ENCODE measurements at regions of chr9 and their contacts with region 1.

Region 1: GRCh38 chr9:99104459-99105151 is at the start of gene TGFBR1:
- DNase-seq: peak; percentile 90 to 96 (median 92)
- H3K4me3 ChIP-seq: peak within 1 kb of the TSS; percentile 40 to 62
- H3K4me3 Mint-ChIP-seq: peak within 1 kb of the TSS; percentile 87 to 96 (median 91)
- H3K27ac ChIP-seq: peak within 1 kb of the TSS; percentile 70
- H3K27ac Mint-ChIP-seq: peak within 1 kb of the TSS; percentile 87 to 95 (median 92)
- H3K4me1 ChIP-seq: peaks cover 57% of the 10 kb centered on the region
- H3K4me1 Mint-ChIP-seq: peaks cover 45 to 65% (median 58%) of the 10 kb centered on the region in 4 donors
- H3K27me3 ChIP-seq: no peaks in the 10 kb centered on the region
- H3K27me3 Mint-ChIP-seq: no peaks in the 10 kb centered on the region
- total RNA-seq, gene TGFBR1: 26.4 to 27.4 TPM

Region 2: GRCh38 chr9:99057665-99058625 is 46.7 kb before region 1 on chr9:
- CTCF ChIA-PET with region 1: interaction called, 26 read pairs
- POLR2A ChIA-PET with region 1: interaction called, 82 read pairs
- intact Hi-C with region 1: loop called (anchors 1 kb)
- DNase-seq: peak; percentile 73 to 86 (median 81)
- H3K4me3 ChIP-seq: peak overlapping the region; percentile 7 to 71
- H3K4me3 Mint-ChIP-seq: peak overlapping the region; percentile 83 to 95 (median 88)
- H3K27ac ChIP-seq: peak overlapping the region; percentile 30
- H3K27ac Mint-ChIP-seq: peak overlapping the region; percentile 80 to 93 (median 86)
- H3K4me1 ChIP-seq: peaks cover 71% of the 10 kb centered on the region
- H3K4me1 Mint-ChIP-seq: peaks cover 59 to 92% (median 77%) of the 10 kb centered on the region in 4 donors
- H3K27me3 ChIP-seq: no peaks in the 10 kb centered on the region
- H3K27me3 Mint-ChIP-seq: no peaks in the 10 kb centered on the region

Region 3: DNA sequence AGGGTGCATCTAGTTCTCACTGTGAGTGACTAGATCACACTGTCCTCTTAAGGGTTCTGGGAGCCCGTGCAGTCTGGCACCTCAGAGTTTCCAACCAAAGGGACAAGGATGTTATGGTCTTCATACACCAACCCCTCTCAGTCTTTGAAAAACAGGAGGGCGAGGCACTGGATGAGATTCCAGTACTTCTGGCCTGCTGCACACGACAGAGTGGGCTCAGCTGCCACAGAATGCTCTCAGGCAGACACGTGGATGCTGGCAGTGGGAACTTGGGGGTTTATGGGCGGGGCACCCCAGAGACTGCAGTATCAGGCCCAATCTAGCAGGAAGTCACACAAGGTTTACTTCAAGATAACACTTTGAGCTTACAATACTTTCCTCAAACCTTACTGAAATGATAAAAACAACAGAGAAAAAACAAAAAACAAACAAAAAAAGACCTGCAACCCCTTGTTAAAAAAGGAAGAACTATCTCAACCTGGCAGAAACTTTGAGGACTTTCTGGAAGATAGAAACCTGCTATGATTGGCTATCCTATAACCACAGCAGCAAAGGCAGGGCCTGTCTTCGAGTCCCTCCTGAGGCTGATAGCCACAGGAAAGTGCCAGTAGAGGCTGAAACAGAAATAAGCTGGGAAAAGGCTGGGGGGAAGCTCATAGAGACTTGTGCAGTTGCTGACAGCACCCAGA is 28.0 kb before region 1 on chr9:
- CTCF ChIA-PET with region 1: interaction called, 3 read pairs
- POLR2A ChIA-PET with region 1: interaction called, 18 read pairs
- intact Hi-C with region 1: loop called (anchors 2 kb)
- DNase-seq: peak; percentile 39 to 61 (median 50)
- H3K4me3 ChIP-seq: no peak overlapping the region
- H3K4me3 Mint-ChIP-seq: peak overlapping the region; percentile 31 to 81 (median 65)
- H3K27ac ChIP-seq: peak overlapping the region; percentile 8
- H3K27ac Mint-ChIP-seq: peak overlapping the region; percentile 72 to 94 (median 82)
- H3K4me1 ChIP-seq: peaks cover 36% of the 10 kb centered on the region
- H3K4me1 Mint-ChIP-seq: peaks cover 32 to 66% (median 47%) of the 10 kb centered on the region in 4 donors
- H3K27me3 ChIP-seq: no peaks in the 10 kb centered on the region
- H3K27me3 Mint-ChIP-seq: no peaks in the 10 kb centered on the region

Region 4: GRCh38 chr9:99118782-99119466 is 14.3 kb after region 1 on chr9:
- CTCF ChIA-PET with region 1: interaction called, 17 read pairs
- POLR2A ChIA-PET with region 1: interaction called, 45 read pairs
- intact Hi-C with region 1: loop called (anchors 1 kb)
- DNase-seq: peak; percentile 66 to 78 (median 70)
- H3K4me3 ChIP-seq: peak overlapping the region; percentile 5 to 7
- H3K4me3 Mint-ChIP-seq: peak overlapping the region; percentile 49 to 95 (median 78)
- H3K27ac ChIP-seq: no peak overlapping the region
- H3K27ac Mint-ChIP-seq: peak overlapping the region; percentile 33 to 95 (median 78)
- H3K4me1 ChIP-seq: peaks cover 90% of the 10 kb centered on the region
- H3K4me1 Mint-ChIP-seq: peaks cover 65 to 91% (median 75%) of the 10 kb centered on the region in 4 donors
- H3K27me3 ChIP-seq: no peaks in the 10 kb centered on the region
- H3K27me3 Mint-ChIP-seq: no peaks in the 10 kb centered on the region

Region 5: GRCh38 chr9:99140685-99141314 is 36.2 kb after region 1 on chr9:
- CTCF ChIA-PET with region 1: interaction called, 71 read pairs
- POLR2A ChIA-PET with region 1: interaction called, 15 read pairs
- intact Hi-C with region 1: loop called (anchors 5 kb)
- DNase-seq: peak; percentile 50 to 56 (median 53)
- H3K4me3 ChIP-seq: no peak overlapping the region
- H3K4me3 Mint-ChIP-seq: peak overlapping the region in 1 of 8 donors; percentile 21
- H3K27ac ChIP-seq: no peak overlapping the region
- H3K27ac Mint-ChIP-seq: peak overlapping the region; percentile 16 to 58 (median 43)
- H3K4me1 ChIP-seq: peaks cover 16% of the 10 kb centered on the region
- H3K4me1 Mint-ChIP-seq: peaks cover 21 to 31% (median 24%) of the 10 kb centered on the region in 4 donors
- H3K27me3 ChIP-seq: no peaks in the 10 kb centered on the region
- H3K27me3 Mint-ChIP-seq: no peaks in the 10 kb centered on the region

Measured in CD4-positive, alpha-beta memory T cell (primary cell).